Sigmoid colon (tissue), 7 donors: ENCODE measurements at regions of chr5 and their contacts with region 1.

Region 1: GRCh38 chr5:1666812-1667588 is 132.6 kb downstream of the MRPL36 start:
- DNase-seq: no peak
- H3K4me3 ChIP-seq: peak overlapping the region in 3 of 4 donors; percentile 21 to 44 (median 25)
- H3K27ac ChIP-seq: no peak overlapping the region
- H3K4me1 ChIP-seq: peaks cover 0 to 16% (median 10%) of the 10 kb centered on the region in 4 donors
- H3K27me3 ChIP-seq: peaks cover 29 to 84% (median 47%) of the 10 kb centered on the region in 3 donors
- CTCF ChIP-seq: no peak
- EP300 ChIP-seq: no peak
- POLR2A ChIP-seq: no peak

Region 2: GRCh38 chr5:1633605-1634336 is 33.2 kb before region 1 on chr5:
- intact Hi-C with region 1: no loop called
- DNase-seq: peak; percentile 91
- H3K4me3 ChIP-seq: peak overlapping the region; percentile 64 to 88 (median 75)
- H3K27ac ChIP-seq: peak overlapping the region; percentile 85 to 93 (median 88)
- H3K4me1 ChIP-seq: peaks cover 0 to 2% (median 0%) of the 10 kb centered on the region in 4 donors
- H3K27me3 ChIP-seq: no peaks in the 10 kb centered on the region
- CTCF ChIP-seq: no peak
- EP300 ChIP-seq: peak in 1 of 4 donors; percentile 19
- POLR2A ChIP-seq: peak; percentile 64 to 68

Region 3: DNA sequence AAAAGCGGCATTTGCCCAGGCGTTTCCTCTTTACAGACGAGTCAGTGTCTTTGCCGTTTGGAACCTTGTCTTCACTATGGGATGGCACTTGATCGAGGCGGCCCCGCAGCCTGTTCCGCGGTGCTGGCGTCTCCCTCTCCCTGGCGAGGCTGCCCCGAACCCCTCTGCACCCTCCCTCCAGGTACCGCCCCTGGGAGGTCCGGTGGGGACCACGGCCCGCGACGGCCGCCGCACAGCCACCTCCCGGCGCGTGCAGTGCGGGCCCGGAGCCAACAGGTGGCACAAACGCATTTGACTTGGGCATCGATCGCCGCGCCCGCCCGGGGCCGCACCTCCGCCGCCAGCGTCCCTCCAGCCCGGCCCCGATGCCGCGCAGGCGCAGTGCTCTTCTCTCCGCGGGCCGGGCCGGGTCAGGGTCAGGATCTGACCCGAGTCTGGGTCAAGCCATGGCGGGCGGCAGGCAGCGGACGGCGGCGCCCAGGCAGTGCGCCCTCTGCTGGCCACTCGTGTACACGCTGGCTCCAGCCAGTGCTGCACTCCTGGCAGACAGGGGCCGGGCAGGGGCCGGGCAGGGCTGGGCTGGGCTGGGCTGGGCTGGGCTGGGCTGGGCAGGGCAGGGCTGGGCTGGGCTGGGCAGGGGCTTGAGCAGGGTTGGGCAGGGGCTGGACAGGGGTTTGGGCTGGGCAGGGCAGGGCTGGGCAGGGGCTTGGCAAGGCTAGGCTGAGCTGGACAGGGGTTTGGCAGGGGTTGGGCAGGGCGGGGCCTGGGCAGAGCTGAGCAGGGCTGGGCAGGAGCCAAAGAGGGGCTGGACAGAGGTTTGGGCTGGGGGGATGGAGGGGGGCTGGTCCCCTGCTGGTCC is 371.6 kb after region 1 on chr5:
- intact Hi-C with region 1: loop called (anchors 5 kb)
- DNase-seq: no peak
- H3K4me3 ChIP-seq: peak overlapping the region; percentile 21 to 54 (median 40)
- H3K27ac ChIP-seq: peak overlapping the region in 1 of 4 donors; percentile 12
- H3K4me1 ChIP-seq: peaks cover 0 to 9% (median 7%) of the 10 kb centered on the region in 4 donors
- H3K27me3 ChIP-seq: no peaks in the 10 kb centered on the region
- CTCF ChIP-seq: peak in 1 of 4 experiments; percentile 79
- EP300 ChIP-seq: no peak
- POLR2A ChIP-seq: no peak